B cell (primary cell): ENCODE measurements at regions of chr13 and their contacts with region 1.

Region 1: GRCh38 chr13:49936085-49936940 is at the start of gene SPRYD7:
- DNase-seq: peak; percentile 98
- ATAC-seq: peak; percentile 97
- H3K4me3 ChIP-seq: peak within 1 kb of the TSS; percentile 76 to 94 (median 84)
- H3K4me3 Mint-ChIP-seq: peak within 1 kb of the TSS; percentile 88
- H3K27ac ChIP-seq: peak within 1 kb of the TSS; percentile 64 to 90
- H3K27ac Mint-ChIP-seq: peak within 1 kb of the TSS; percentile 86
- H3K4me1 ChIP-seq: peaks cover 15 to 17% of the 10 kb centered on the region in 2 donors
- H3K4me1 Mint-ChIP-seq: peaks cover 31% of the 10 kb centered on the region
- H3K27me3 ChIP-seq: no peaks in the 10 kb centered on the region
- H3K27me3 Mint-ChIP-seq: no peaks in the 10 kb centered on the region
- CTCF ChIP-seq: peak; percentile 80
- total RNA-seq, gene SPRYD7: 3.8 and 4.5 TPM in 2 replicates

Region 2: GRCh38 chr13:48859272-48860105 is 1076.8 kb before region 1 on chr13:
- CTCF ChIA-PET with region 1: no interaction called
- POLR2A ChIA-PET with region 1: no interaction called
- intact Hi-C with region 1: no loop called
- DNase-seq: peak; percentile 8
- ATAC-seq: no peak
- H3K4me3 ChIP-seq: no peak overlapping the region
- H3K4me3 Mint-ChIP-seq: no peak overlapping the region
- H3K27ac ChIP-seq: no peak overlapping the region
- H3K27ac Mint-ChIP-seq: no peak overlapping the region
- H3K4me1 ChIP-seq: peaks cover 0 to 5% of the 10 kb centered on the region in 2 donors
- H3K4me1 Mint-ChIP-seq: peaks cover 10% of the 10 kb centered on the region
- H3K27me3 ChIP-seq: peaks cover 0 to 4% (median 0%) of the 10 kb centered on the region in 4 experiments
- H3K27me3 Mint-ChIP-seq: peaks cover 3% of the 10 kb centered on the region
- CTCF ChIP-seq: no peak

Region 3: DNA sequence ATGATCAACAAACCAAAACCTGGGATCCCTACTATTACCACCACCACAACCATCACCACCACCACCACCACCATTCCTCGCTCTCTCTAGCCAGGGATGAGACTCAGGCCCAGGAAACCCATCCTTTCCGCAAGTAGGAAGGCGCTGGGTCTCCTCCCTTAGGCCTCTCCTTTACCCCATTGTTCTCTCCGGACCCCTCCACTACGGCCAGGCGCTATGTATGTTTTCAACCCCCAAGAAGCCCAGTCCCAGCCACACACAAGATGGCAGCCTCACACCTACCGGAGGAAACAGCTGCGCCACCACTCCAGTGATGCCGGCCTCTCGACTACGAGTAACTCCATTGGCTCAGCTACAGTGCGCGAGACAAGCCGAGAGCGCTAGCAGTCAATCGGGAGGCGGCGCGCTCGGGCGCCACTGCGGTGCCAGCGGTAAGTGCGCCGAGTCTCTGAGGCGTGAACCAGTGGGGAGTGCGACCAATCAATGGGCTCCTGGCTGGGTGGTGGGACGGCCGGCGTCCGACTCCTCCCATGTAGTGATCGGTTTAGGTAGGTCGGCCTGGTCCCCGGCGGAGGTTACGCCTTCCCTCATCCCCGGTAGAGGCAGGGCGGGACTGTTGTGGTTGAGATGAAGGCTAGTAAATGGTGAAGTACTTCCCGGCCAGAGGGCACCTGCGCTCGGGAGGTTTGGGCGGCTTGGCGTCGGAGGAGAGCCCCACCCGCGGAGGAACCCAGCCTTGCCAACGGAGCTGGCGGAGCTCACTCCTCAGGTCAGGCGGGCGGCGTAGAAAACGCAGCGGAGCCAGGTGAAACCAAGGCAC is 492.4 kb before region 1 on chr13 and contains the starts of genes CAB39L and SETDB2:
- CTCF ChIA-PET with region 1: interaction called, 3 read pairs
- POLR2A ChIA-PET with region 1: no interaction called
- intact Hi-C with region 1: loop called (anchors 2 kb)
- DNase-seq: peak; percentile 100
- ATAC-seq: peak; percentile 89
- H3K4me3 ChIP-seq: peak within 1 kb of the TSS; percentile 63 to 98 (median 81)
- H3K4me3 Mint-ChIP-seq: peak within 1 kb of the TSS; percentile 96
- H3K27ac ChIP-seq: peak within 1 kb of the TSS; percentile 97
- H3K27ac Mint-ChIP-seq: peak within 1 kb of the TSS; percentile 99
- H3K4me1 ChIP-seq: peaks cover 33 to 51% of the 10 kb centered on the region in 2 donors
- H3K4me1 Mint-ChIP-seq: peaks cover 71% of the 10 kb centered on the region
- H3K27me3 ChIP-seq: no peaks in the 10 kb centered on the region
- H3K27me3 Mint-ChIP-seq: no peaks in the 10 kb centered on the region
- CTCF ChIP-seq: peak; percentile 34
- total RNA-seq, gene CAB39L: 8.9 and 9.6 TPM in 2 replicates
- total RNA-seq, gene SETDB2: 38.2 and 40.1 TPM in 2 replicates

Region 4: DNA sequence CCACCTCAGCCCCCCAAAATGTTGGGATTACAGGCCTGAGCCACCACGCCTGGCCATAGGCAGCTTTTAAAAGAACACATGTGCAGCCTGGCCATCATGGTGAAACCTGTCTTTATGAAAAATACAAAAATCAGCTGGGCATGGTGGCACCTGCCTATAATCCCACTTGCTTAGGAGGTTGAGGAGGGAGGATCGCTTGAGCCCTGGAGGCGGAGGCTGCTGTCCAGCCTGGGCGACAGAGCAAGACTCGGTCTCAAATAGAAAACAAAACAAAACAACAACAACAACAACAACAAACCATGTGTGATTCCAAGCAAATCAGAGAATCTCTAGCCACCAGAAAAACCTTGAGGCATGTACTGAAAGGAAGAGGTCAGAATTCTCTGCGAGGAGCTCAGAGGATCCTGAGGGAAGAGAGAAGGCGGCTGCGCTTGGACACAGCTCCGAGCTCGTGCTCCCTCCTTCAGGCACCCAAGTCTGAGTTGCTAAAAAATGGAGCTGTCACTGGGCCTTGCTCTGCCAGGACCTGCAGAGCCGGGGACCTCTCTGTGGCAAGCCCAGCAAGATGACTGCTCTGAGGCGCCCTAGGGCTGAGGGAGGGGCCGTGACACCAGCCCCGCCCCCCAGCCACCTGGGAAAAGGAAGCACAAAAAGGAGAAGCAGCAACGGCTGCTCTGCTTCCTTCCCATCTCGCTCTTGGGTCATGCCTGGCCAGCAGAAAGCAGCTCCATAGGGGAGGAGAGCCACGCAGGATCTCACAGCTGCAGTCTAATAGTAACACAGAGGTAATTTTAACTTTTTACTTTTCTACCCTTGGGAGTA is 308.3 kb before region 1 on chr13 and contains the start of gene ARL11:
- CTCF ChIA-PET with region 1: no interaction called
- POLR2A ChIA-PET with region 1: no interaction called
- intact Hi-C with region 1: loop called (anchors 5 kb)
- DNase-seq: peak; percentile 88
- ATAC-seq: peak; percentile 99
- H3K4me3 ChIP-seq: peak within 1 kb of the TSS; percentile 79 to 100 (median 90)
- H3K4me3 Mint-ChIP-seq: peak within 1 kb of the TSS; percentile 99
- H3K27ac ChIP-seq: peak within 1 kb of the TSS; percentile 61 to 78
- H3K27ac Mint-ChIP-seq: peak within 1 kb of the TSS; percentile 94
- H3K4me1 ChIP-seq: peaks cover 17 to 21% of the 10 kb centered on the region in 2 donors
- H3K4me1 Mint-ChIP-seq: peaks cover 44% of the 10 kb centered on the region
- H3K27me3 ChIP-seq: no peaks in the 10 kb centered on the region
- H3K27me3 Mint-ChIP-seq: no peaks in the 10 kb centered on the region
- CTCF ChIP-seq: no peak
- total RNA-seq, gene ARL11: 17.9 and 21.4 TPM in 2 replicates

Region 5: GRCh38 chr13:49922301-49922700 is 14.0 kb before region 1 on chr13:
- CTCF ChIA-PET with region 1: interaction called, 10 read pairs
- POLR2A ChIA-PET with region 1: interaction called, 5 read pairs
- intact Hi-C with region 1: no loop called
- DNase-seq: no peak
- ATAC-seq: no peak
- H3K4me3 ChIP-seq: no peak overlapping the region
- H3K4me3 Mint-ChIP-seq: no peak overlapping the region
- H3K27ac ChIP-seq: no peak overlapping the region
- H3K27ac Mint-ChIP-seq: no peak overlapping the region
- H3K4me1 ChIP-seq: no peaks in the 10 kb centered on the region
- H3K4me1 Mint-ChIP-seq: peaks cover 1% of the 10 kb centered on the region
- H3K27me3 ChIP-seq: no peaks in the 10 kb centered on the region
- H3K27me3 Mint-ChIP-seq: no peaks in the 10 kb centered on the region
- CTCF ChIP-seq: no peak

Region 6: GRCh38 chr13:50081679-50082425 is 145.5 kb after region 1 on chr13:
- CTCF ChIA-PET with region 1: interaction called, 4 read pairs
- POLR2A ChIA-PET with region 1: no interaction called
- intact Hi-C with region 1: loop called (anchors 5 kb)
- DNase-seq: peak; percentile 99
- ATAC-seq: peak; percentile 77
- H3K4me3 ChIP-seq: peak overlapping the region; percentile 81 to 99 (median 91)
- H3K4me3 Mint-ChIP-seq: peak overlapping the region; percentile 94
- H3K27ac ChIP-seq: peak overlapping the region; percentile 82 to 85
- H3K27ac Mint-ChIP-seq: peak overlapping the region; percentile 94
- H3K4me1 ChIP-seq: peaks cover 29 to 48% of the 10 kb centered on the region in 2 donors
- H3K4me1 Mint-ChIP-seq: peaks cover 57% of the 10 kb centered on the region
- H3K27me3 ChIP-seq: no peaks in the 10 kb centered on the region
- H3K27me3 Mint-ChIP-seq: no peaks in the 10 kb centered on the region
- CTCF ChIP-seq: no peak

Region 7: DNA sequence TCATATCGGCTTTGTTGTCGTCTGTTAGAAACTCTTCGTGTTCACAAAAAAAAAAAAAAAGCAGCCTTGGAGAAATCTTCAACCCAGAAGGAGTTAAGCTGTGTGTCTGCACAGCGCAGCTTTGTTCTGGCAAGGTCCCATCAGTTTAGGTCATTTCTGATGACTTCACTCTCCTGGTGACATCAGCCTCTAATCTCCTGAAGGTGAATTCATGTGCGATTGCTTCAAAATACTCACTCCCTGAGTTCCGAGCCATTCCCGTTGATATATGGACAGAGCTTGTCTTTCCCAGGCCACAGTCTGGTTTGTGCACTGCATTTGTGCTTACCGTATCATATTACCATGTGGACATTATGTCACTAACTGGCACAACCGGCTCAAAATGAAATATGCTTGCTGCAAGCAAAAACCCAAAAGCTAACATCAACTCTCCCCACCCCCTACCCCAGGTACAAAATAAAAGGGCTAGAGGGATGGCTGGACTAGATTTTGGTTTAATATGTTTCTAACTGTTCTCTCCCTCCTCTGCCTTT is 421.3 kb after region 1 on chr13:
- CTCF ChIA-PET with region 1: no interaction called
- POLR2A ChIA-PET with region 1: no interaction called
- intact Hi-C with region 1: no loop called
- DNase-seq: no peak
- ATAC-seq: no peak
- H3K4me3 ChIP-seq: no peak overlapping the region
- H3K4me3 Mint-ChIP-seq: no peak overlapping the region
- H3K27ac ChIP-seq: no peak overlapping the region
- H3K27ac Mint-ChIP-seq: no peak overlapping the region
- H3K4me1 ChIP-seq: peaks cover 30 to 36% of the 10 kb centered on the region in 2 donors
- H3K4me1 Mint-ChIP-seq: peaks cover 47% of the 10 kb centered on the region
- H3K27me3 ChIP-seq: no peaks in the 10 kb centered on the region
- H3K27me3 Mint-ChIP-seq: no peaks in the 10 kb centered on the region
- CTCF ChIP-seq: no peak

Region 8: DNA sequence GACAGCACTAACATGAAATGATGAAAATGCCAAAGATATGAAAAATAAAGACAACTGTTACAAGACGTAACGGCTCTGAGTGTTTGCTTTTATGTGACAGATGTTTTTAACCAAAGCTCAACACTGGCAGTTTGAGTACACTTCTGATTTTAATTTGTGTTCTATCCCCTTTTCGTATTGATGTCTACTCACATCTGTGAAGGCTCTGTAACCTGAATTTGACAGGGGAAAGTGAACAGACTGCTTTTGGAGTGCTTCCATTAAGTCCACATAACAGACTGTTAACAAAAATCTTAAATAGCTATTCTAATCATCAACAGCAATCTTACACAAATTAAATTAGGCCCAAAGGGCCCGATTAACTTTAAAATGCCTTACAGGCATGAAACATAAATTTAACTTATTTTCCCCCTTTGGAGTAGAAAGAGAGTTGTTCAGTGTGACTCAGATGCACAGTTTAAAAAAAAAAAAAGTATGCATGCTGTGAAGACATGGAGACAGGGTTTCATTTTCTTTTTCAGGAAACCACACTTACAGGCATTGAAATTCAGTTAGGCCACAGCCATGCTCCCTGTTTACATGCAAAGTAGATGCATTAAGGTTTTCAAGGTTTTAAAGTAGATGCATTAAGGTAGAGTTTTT is 957.0 kb after region 1 on chr13:
- CTCF ChIA-PET with region 1: no interaction called
- POLR2A ChIA-PET with region 1: no interaction called
- intact Hi-C with region 1: loop called (anchors 5 kb)
- DNase-seq: peak; percentile 64
- ATAC-seq: peak; percentile 83
- H3K4me3 ChIP-seq: peak overlapping the region in 4 of 5 experiments; percentile 11 to 55 (median 30)
- H3K4me3 Mint-ChIP-seq: peak overlapping the region; percentile 85
- H3K27ac ChIP-seq: peak overlapping the region; percentile 76 to 78
- H3K27ac Mint-ChIP-seq: peak overlapping the region; percentile 95
- H3K4me1 ChIP-seq: peaks cover 53 to 56% of the 10 kb centered on the region in 2 donors
- H3K4me1 Mint-ChIP-seq: peaks cover 57% of the 10 kb centered on the region
- H3K27me3 ChIP-seq: no peaks in the 10 kb centered on the region
- H3K27me3 Mint-ChIP-seq: no peaks in the 10 kb centered on the region
- CTCF ChIP-seq: no peak